Activated naive CD4-positive, alpha-beta T cell treated with anti-CD3 and anti-CD28 coated beads for 36 hours (primary cell): ENCODE measurements at regions of chr2 and their contacts with region 1.

Region 1: DNA sequence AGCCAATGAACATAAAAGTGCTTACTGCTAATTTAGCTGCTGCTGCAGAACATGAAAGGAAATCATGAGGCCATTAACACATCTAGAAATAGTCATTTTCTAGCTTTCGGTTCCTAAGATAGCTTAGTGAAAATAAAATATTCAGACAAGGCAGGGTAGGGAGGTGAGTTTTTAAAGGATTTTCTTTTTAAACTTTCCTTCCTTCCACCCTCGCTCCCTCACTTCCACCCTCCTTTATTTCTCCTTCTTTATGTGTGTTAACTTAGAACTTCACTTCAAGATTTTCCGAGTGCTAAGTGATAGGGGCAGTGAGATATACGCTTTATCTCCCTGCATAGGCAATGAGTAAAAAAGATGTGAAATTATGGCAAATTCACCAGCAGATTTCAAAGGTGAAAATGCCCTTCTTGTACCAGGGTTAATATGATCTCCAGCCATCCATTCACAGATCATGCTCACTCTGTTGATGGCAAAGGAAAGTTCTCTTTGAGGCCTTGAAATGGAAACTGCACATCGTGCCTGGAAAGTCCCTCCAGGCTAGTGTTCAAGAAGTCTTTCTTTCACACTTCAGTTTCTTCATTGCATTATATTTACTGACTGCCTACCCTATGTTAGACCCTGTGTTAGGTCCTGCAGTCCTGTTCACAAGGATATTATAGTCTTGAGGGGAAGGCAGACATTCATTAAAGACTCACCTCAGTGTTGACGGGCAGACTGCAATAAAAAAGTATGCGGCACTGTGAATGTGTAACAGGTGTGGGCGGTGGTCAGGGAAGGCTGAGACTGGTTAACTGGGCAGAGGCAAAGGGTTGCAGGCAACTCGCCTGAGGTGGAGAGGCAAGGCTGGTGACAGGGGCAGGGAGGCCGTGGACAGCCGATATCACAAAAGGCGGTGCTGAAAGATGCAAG is 200.8 kb downstream of the PLCL1 start:
- DNase-seq: peak; percentile 74
- H3K4me3 Mint-ChIP-seq: peak overlapping the region; percentile 60
- H3K27ac Mint-ChIP-seq: peak overlapping the region; percentile 89
- H3K4me1 Mint-ChIP-seq: peaks cover 66% of the 10 kb centered on the region
- H3K27me3 Mint-ChIP-seq: no peaks in the 10 kb centered on the region

Region 2: GRCh38 chr2:197434541-197435513 is 570.3 kb before region 1 on chr2 and contains the start of gene SF3B1:
- CTCF ChIA-PET with region 1: no interaction called
- intact Hi-C with region 1: loop called (anchors 10 kb)
- DNase-seq: peak; percentile 100
- H3K4me3 Mint-ChIP-seq: peak within 1 kb of the TSS; percentile 99
- H3K27ac Mint-ChIP-seq: peak within 1 kb of the TSS; percentile 100
- H3K4me1 Mint-ChIP-seq: peaks cover 46% of the 10 kb centered on the region
- H3K27me3 Mint-ChIP-seq: no peaks in the 10 kb centered on the region
- total RNA-seq, gene SF3B1: 235 to 248 TPM

Region 3: DNA sequence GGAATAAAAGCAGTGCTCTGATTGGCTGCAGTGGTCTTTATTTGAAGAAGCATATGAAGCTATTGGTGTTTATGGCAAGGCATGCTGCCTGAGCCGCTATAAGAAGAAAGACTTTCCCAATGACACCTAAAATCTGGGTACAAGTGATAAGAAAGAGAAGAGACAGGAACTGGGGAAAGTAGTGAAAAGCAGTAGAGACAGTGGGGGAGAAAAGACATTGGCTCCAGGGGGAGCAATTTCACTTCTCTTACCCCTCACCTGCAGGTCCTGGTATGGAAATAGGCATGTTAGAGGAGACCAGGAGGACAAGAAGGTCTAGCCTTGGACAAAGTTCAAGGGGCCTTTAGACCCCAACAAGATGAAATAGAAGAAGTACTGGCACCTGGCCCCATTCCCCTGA is 153.7 kb before region 1 on chr2:
- CTCF ChIA-PET with region 1: interaction called, 4 read pairs
- intact Hi-C with region 1: loop called (anchors 1 kb)
- DNase-seq: peak; percentile 52
- H3K4me3 Mint-ChIP-seq: no peak overlapping the region
- H3K27ac Mint-ChIP-seq: no peak overlapping the region
- H3K4me1 Mint-ChIP-seq: peaks cover 89% of the 10 kb centered on the region
- H3K27me3 Mint-ChIP-seq: no peaks in the 10 kb centered on the region

Region 4: GRCh38 chr2:197952540-197953202 is 52.5 kb before region 1 on chr2:
- CTCF ChIA-PET with region 1: interaction called, 3 read pairs
- intact Hi-C with region 1: loop called (anchors 2 kb)
- DNase-seq: peak; percentile 51
- H3K4me3 Mint-ChIP-seq: no peak overlapping the region
- H3K27ac Mint-ChIP-seq: peak overlapping the region; percentile 9
- H3K4me1 Mint-ChIP-seq: peaks cover 79% of the 10 kb centered on the region
- H3K27me3 Mint-ChIP-seq: no peaks in the 10 kb centered on the region

Region 5: GRCh38 chr2:198042189-198042588 is 37.0 kb after region 1 on chr2:
- CTCF ChIA-PET with region 1: no interaction called
- intact Hi-C with region 1: loop called (anchors 1 kb)
- DNase-seq: no peak
- H3K4me3 Mint-ChIP-seq: no peak overlapping the region
- H3K27ac Mint-ChIP-seq: no peak overlapping the region
- H3K4me1 Mint-ChIP-seq: peaks cover 15% of the 10 kb centered on the region
- H3K27me3 Mint-ChIP-seq: no peaks in the 10 kb centered on the region

Region 6: GRCh38 chr2:198296665-198297308 is 291.6 kb after region 1 on chr2:
- CTCF ChIA-PET with region 1: no interaction called
- intact Hi-C with region 1: loop called (anchors 10 kb)
- DNase-seq: peak; percentile 73
- H3K4me3 Mint-ChIP-seq: no peak overlapping the region
- H3K27ac Mint-ChIP-seq: no peak overlapping the region
- H3K4me1 Mint-ChIP-seq: no peaks in the 10 kb centered on the region
- H3K27me3 Mint-ChIP-seq: peaks cover 7% of the 10 kb centered on the region